ENCODE measurements at regions of chr16 and their contacts with region 1.

Region 1: GRCh38 chr16:85554112-85554813 is 58.9 kb upstream of the GSE1 start:
- DNase-seq: peak; percentile 75
- H3K4me3 Mint-ChIP-seq: peak overlapping the region; percentile 90
- H3K27ac Mint-ChIP-seq: peak overlapping the region; percentile 95
- H3K4me1 Mint-ChIP-seq: peaks cover 34% of the 10 kb centered on the region
- H3K27me3 Mint-ChIP-seq: peaks cover 5% of the 10 kb centered on the region

Region 2: DNA sequence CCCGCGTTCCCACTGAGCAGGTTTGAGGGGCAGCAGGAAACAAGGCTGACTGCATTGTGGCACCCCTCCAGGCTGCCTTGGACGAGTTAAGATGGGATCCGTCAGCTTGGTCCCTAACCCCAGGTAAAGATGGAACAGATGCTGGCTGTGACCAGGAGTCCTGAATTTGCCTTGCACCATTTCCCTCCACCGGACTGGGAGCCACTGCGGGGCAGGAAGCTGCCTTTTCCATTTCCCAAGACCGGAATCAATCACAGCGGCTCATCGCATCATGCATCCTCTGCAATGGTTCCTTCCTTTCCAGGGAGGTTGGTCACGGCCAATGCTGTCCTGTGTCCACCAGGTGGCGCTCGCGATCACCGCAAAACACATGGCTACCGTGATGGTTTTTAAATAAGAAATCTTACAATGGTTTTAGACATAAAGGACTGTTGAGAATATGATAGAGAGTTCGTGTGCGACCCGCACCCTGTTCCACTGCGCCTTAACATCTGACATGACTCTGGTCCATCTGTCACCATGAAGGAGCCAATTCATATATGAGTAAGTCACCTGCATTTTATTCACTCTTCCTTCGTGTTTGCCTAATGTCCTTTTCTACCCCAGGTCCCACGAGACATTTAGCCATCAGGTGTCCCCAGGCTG is 1043.0 kb before region 1 on chr16:
- intact Hi-C with region 1: loop called (anchors 10 kb)
- DNase-seq: peak; percentile 73
- H3K4me3 Mint-ChIP-seq: peak overlapping the region; percentile 38
- H3K27ac Mint-ChIP-seq: peak overlapping the region; percentile 49
- H3K4me1 Mint-ChIP-seq: peaks cover 72% of the 10 kb centered on the region
- H3K27me3 Mint-ChIP-seq: no peaks in the 10 kb centered on the region

Region 3: DNA sequence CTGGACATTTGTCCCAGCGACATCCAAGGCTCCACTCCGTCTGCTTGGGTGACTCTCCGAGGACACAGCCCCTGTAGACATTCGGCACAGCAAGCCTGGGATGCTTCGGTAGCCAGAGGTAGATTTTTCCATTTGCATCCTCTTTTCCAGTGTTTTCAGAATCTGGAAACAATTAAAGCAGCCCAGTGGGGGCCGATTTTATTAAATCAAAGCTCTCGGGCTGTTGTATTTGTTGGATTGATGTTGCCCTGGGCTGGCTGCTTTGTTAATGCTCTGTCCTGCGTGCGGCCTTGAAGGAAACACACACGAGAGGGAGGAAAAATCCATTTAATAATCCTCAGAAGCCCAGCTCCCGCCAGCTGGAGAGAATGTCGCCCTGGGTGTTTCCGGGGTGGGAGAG is 283.9 kb before region 1 on chr16:
- intact Hi-C with region 1: no loop called
- DNase-seq: no peak
- H3K4me3 Mint-ChIP-seq: no peak overlapping the region
- H3K27ac Mint-ChIP-seq: no peak overlapping the region
- H3K4me1 Mint-ChIP-seq: no peaks in the 10 kb centered on the region
- H3K27me3 Mint-ChIP-seq: peaks cover 2% of the 10 kb centered on the region

Region 4: GRCh38 chr16:85305996-85306792 is 248.1 kb before region 1 on chr16:
- intact Hi-C with region 1: loop called (anchors 1 kb)
- DNase-seq: peak; percentile 80
- H3K4me3 Mint-ChIP-seq: peak overlapping the region; percentile 55
- H3K27ac Mint-ChIP-seq: peak overlapping the region; percentile 89
- H3K4me1 Mint-ChIP-seq: peaks cover 42% of the 10 kb centered on the region
- H3K27me3 Mint-ChIP-seq: no peaks in the 10 kb centered on the region

Region 5: GRCh38 chr16:85347213-85347591 is 207.1 kb before region 1 on chr16:
- intact Hi-C with region 1: no loop called
- DNase-seq: no peak
- H3K4me3 Mint-ChIP-seq: no peak overlapping the region
- H3K27ac Mint-ChIP-seq: no peak overlapping the region
- H3K4me1 Mint-ChIP-seq: no peaks in the 10 kb centered on the region
- H3K27me3 Mint-ChIP-seq: no peaks in the 10 kb centered on the region

Region 6: GRCh38 chr16:85426410-85427205 is 127.7 kb before region 1 on chr16:
- intact Hi-C with region 1: no loop called
- DNase-seq: no peak
- H3K4me3 Mint-ChIP-seq: no peak overlapping the region
- H3K27ac Mint-ChIP-seq: no peak overlapping the region
- H3K4me1 Mint-ChIP-seq: no peaks in the 10 kb centered on the region
- H3K27me3 Mint-ChIP-seq: peaks cover 3% of the 10 kb centered on the region

Region 7: GRCh38 chr16:85564277-85565051 is 10.2 kb after region 1 on chr16:
- intact Hi-C with region 1: loop called (anchors 1 kb)
- DNase-seq: no peak
- H3K4me3 Mint-ChIP-seq: no peak overlapping the region
- H3K27ac Mint-ChIP-seq: no peak overlapping the region
- H3K4me1 Mint-ChIP-seq: peaks cover 31% of the 10 kb centered on the region
- H3K27me3 Mint-ChIP-seq: no peaks in the 10 kb centered on the region

Region 8: GRCh38 chr16:85583491-85584181 is 29.4 kb after region 1 on chr16:
- intact Hi-C with region 1: no loop called
- DNase-seq: no peak
- H3K4me3 Mint-ChIP-seq: no peak overlapping the region
- H3K27ac Mint-ChIP-seq: no peak overlapping the region
- H3K4me1 Mint-ChIP-seq: peaks cover 3% of the 10 kb centered on the region
- H3K27me3 Mint-ChIP-seq: no peaks in the 10 kb centered on the region

Region 9: GRCh38 chr16:85610508-85611332 is 56.5 kb after region 1 on chr16:
- intact Hi-C with region 1: loop called (anchors 1 kb)
- DNase-seq: peak; percentile 75
- H3K4me3 Mint-ChIP-seq: peak overlapping the region; percentile 80
- H3K27ac Mint-ChIP-seq: peak overlapping the region; percentile 63
- H3K4me1 Mint-ChIP-seq: peaks cover 26% of the 10 kb centered on the region
- H3K27me3 Mint-ChIP-seq: peaks cover 13% of the 10 kb centered on the region

Region 10: GRCh38 chr16:85799497-85800337 is 245.5 kb after region 1 on chr16 and contains the starts of genes COX4I1 and EMC8:
- intact Hi-C with region 1: loop called (anchors 5 kb)
- DNase-seq: peak; percentile 93
- H3K4me3 Mint-ChIP-seq: peak within 1 kb of the TSS; percentile 92
- H3K27ac Mint-ChIP-seq: peak within 1 kb of the TSS; percentile 96
- H3K4me1 Mint-ChIP-seq: peaks cover 57% of the 10 kb centered on the region
- H3K27me3 Mint-ChIP-seq: no peaks in the 10 kb centered on the region
- total RNA-seq, gene COX4I1: 544 and 558 TPM in 2 replicates
- total RNA-seq, gene EMC8: 49.5 and 51.1 TPM in 2 replicates

Measured in activated T-helper 1 cell treated with anti-CD3 and anti-CD28 coated beads, Interleukin-12 subunit alpha, Interleukin-12 subunit beta, Interleukin-2, Interleukin-4 antibody, amounts not matched to agents 30 ng/mL and 10 ng/mL and 1 ng/mL, durations not matched to agents 14 hours and 24 hours and 36 hours (primary cell).